ENCODE measurements at regions of chr9 and their contacts with region 1.

Region 1: DNA sequence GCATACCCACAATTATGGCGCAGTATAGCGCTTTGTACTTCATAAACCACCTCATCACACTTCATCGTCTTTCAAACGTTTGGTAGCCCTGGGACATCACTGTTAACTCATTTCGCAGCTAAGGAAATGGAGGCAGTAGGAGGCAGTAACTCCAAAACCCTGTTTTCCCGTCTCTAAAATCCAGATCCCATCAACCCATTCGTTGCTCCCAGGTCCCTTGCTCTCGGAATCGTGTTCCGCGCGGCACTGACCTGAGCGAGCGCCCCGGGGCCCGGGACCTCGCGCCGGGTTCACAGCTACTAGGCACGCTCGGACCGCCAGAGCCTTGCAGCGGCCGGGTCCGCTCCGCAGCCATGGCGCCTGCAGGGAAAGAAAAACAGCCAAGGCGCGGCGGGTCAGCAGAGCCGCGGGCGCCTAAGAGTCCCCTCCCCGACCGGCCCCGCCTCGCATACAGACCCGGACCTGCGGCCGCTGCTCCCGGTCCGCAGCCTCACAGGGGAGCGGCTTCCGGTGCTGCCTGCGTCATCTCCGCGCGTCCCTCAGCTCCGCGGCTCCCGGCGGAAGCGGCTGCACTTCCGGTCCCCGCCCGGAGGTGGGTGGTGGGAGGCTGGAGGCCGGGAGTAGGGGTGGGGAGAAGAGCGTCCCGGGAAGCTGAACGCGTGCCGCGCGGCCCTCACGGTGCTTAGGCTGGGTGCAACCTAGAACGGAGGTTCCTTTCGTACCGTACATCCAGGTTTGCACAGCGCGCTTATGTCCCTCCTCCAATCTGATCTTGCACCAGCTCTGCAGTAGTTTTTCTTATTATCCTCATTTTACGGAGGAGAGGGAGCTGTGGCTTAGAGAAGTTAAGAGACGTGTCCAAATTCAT is at the start of gene FBXW2:
- DNase-seq: peak; percentile 94
- ATAC-seq: peak; percentile 100
- total RNA-seq, gene FBXW2: 44.6 to 45.5 TPM

Region 2: GRCh38 chr9:120394058-120394669 is 399.0 kb before region 1 on chr9:
- intact Hi-C with region 1: no loop called
- DNase-seq: no peak
- ATAC-seq: peak in 1 of 2 donors; percentile 24

Region 3: DNA sequence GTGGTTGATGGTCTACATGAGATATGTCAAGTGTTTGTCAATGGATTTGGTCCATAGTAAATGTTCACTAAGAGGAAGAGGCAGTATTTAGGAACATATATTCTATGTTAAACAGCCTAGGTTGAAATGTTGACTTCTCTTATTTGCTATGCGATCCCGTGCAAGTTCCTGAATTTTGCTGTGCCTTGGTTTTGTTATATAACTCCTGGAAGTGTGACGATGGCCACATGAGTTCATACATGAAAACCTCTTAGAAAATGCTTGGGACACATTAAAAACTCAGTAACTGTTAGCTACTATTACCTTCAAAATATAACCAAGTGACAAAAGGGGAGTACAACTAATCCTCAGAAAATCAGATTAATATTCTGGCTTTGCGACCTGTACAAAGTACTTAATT is 21.9 kb after region 1 on chr9:
- intact Hi-C with region 1: no loop called
- DNase-seq: no peak
- ATAC-seq: no peak

Region 4: DNA sequence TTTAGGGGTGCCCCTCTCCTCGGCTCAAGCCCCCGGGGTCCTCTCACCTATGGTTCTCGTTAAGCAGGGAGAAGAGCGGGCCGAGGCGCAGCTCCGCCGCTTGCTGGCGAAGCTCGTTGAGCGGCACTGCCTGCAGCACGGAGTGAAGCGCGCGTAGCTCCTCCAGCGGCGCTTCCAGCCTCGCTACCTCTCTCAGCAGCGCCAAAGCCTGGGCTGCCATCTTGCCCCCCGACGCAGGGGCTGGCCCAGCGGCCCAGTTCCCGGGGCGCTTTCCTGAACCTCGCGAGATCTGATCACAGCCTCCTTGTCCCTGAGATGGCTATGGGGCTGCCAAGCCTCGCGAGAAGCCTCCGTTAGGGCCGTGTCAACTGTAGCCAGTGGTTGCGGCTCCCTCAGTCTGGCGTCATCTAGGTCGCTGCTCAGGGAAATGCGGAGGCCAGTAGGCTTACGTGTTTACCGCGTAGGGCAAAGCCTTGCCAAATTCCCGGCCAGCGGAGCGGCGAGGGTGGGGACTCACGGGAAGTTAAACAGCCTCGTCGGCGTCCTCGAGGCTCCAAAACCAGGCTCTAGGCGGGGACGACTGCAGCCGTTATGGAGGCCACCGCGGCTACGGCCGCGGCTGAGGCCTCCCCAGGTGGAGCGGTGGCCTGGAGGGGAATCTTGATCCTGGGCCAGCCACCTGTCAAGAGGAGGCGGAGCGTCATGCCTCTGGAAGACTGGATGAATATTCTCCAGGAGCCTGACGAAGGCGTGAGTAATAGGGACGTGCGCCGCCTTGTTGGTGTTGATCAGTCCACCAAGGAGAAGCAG is 49.8 kb after region 1 on chr9 and contains the start of gene PSMD5:
- intact Hi-C with region 1: loop called in 1 of 2 experiments (anchors 5 kb)
- DNase-seq: peak; percentile 99
- ATAC-seq: peak; percentile 99
- total RNA-seq, gene PSMD5: 22.5 to 25.9 TPM

Region 5: GRCh38 chr9:121992571-121993212 is 1199.6 kb after region 1 on chr9:
- intact Hi-C with region 1: no loop called
- DNase-seq: peak; percentile 69
- ATAC-seq: peak; percentile 80 to 88

Measured in left cardiac atrium (tissue), 4 donors.